ENCODE measurements at regions of chr10 and their contacts with region 1.

Region 1: GRCh38 chr10:73886085-73886529 is 11.8 kb upstream of the CAMK2G start:
- DNase-seq: peak; percentile 41 to 95 (median 62)

Region 2: DNA sequence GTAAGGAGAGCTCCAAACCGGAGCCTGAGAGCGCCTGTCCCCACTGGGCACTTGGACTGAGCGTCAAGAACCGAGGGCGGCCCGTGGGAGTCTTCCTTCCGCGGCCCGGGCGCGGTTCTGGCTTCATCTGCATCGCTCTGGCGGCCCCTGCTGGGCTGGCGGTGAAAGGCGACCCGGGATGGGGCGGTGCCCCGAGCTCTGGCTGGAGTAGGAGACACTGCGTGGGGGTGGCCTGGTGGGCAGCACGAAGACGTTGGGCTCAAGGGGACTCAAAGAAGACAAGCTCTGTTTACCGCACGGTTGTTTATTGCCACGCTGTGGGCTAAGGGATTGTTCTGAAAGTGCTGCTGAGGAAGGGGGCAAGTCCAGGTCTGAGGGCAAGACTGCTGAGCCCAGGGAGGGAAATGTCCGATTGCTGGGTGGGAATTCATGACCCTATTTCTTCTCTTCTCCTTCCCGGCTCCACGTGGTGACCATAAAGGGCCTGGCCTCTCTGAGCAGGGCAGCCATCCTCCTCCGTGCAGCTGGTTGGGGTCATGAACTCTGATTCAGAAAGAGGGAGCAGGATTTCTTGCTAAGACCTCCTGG is 54.6 kb after region 1 on chr10:
- intact Hi-C with region 1: loop called (anchors 1 kb)
- DNase-seq: peak; percentile 30 to 93 (median 64)

Region 3: DNA sequence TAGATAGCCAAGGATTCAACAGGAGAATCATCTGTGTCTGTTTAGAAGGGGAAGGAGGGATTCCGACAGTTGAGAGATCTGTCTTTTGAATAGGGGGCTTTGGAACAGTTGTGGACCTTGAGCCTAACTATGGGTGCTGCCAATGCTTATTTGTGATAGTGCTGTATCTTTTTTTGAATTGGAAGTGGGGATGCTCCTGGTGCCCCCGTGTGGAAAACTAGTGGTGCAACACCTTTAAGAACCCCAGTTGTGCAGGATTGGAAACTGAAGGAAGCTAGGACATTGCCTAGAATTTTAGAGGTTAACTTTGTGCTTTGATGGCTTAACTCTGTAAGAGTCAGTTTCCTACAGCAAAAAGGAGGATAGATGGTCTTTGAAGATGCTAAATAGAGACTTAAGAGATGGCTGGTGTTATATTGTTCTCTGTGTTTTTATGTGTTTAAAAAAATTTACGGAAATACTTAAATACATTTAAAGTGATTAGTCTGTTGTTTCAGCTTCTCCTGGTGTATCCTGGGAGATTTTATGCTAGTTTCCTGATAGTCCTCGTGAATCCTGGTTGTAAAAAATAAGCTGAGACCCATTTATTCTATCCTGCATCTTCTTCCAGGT is 195.2 kb after region 1 on chr10:
- intact Hi-C with region 1: loop called (anchors 1 kb)
- DNase-seq: peak in 6 of 10 donors; percentile 23 to 91 (median 47)